GM12878 (cell line): ENCODE measurements at regions of chr1 and their contacts with region 1.

Region 1: DNA sequence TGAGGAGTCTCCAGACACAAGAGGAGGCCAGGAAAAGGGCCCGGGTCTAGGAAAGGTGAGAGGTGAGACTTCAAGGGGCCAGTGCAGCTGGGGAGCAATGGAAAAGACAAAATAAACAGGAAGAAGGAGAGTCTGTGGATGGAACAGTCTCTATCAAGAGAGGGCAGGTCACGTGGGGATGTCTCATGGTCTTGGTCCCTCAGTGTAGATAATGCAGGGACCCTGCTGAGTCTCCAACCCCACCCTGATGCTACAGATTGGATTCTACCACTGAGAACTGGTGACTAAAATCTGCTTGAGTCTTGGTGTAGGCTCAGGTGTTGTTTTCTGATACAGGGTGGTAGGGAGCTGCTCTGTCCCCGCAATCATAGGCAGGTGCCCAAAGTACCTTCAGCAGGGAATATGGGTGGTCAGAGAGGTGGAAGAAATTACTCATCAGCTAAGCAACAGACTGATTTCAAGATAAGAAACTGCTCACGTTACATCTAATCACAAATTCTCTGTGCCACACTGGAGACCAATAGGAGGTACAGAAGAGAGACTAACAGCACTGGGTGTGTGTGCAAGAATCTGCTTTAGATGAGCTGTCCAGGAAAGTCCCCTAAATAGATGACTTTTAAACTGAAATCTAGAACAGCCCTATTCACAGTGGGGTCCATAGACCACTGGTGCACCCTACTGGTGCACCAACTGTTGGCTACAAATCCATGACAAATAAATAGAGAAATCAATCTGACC is 101.5 kb upstream of the TLR5 start:
- DNase-seq: peak; percentile 30
- ATAC-seq: peak; percentile 93
- H3K4me3 ChIP-seq: no peak overlapping the region
- H3K27ac ChIP-seq: no peak overlapping the region
- H3K4me1 ChIP-seq: no peaks in the 10 kb centered on the region
- H3K27me3 ChIP-seq: no peaks in the 10 kb centered on the region; a peak in 1 of 4 replicates
- CTCF ChIP-seq: peak; percentile 46 to 84 (median 59); a peak in 5 of 6 replicates
- EP300 ChIP-seq: peak; percentile 22 to 58; a peak in 2 of 4 replicates
- POLR2A ChIP-seq: no peak
- RAD21 ChIP-seq: peak; percentile 66

Region 2: GRCh38 chr1:223081181-223081994 is 163.1 kb before region 1 on chr1:
- CTCF ChIA-PET with region 1: interaction called, 3 read pairs
- POLR2A ChIA-PET with region 1: no interaction called
- RAD21 ChIA-PET with region 1: no interaction called
- SMC1A ChIA-PET with region 1: no interaction called
- in situ Hi-C with region 1: no loop called
- intact Hi-C with region 1: loop called (anchors 5 kb)
- DNase-seq: peak; percentile 11
- ATAC-seq: peak; percentile 99
- H3K4me3 ChIP-seq: peak overlapping the region; percentile 16; the same call in 1 of the 2 replicates
- H3K27ac ChIP-seq: no peak overlapping the region
- H3K4me1 ChIP-seq: no peaks in the 10 kb centered on the region
- H3K27me3 ChIP-seq: no peaks in the 10 kb centered on the region; a peak in 1 of 4 replicates
- CTCF ChIP-seq: peak; percentile 76 to 94 (median 93); a peak in 5 of 6 replicates
- EP300 ChIP-seq: no peak
- POLR2A ChIP-seq: no peak
- RAD21 ChIP-seq: peak; percentile 85

Region 3: GRCh38 chr1:223123011-223123610 is 121.4 kb before region 1 on chr1:
- CTCF ChIA-PET with region 1: interaction called, 17 read pairs
- POLR2A ChIA-PET with region 1: no interaction called
- RAD21 ChIA-PET with region 1: interaction called, 10 read pairs
- SMC1A ChIA-PET with region 1: interaction called, 9 read pairs
- in situ Hi-C with region 1: no loop called
- intact Hi-C with region 1: no loop called
- DNase-seq: no peak
- ATAC-seq: no peak
- H3K4me3 ChIP-seq: no peak overlapping the region
- H3K27ac ChIP-seq: no peak overlapping the region
- H3K4me1 ChIP-seq: no peaks in the 10 kb centered on the region
- H3K27me3 ChIP-seq: no peaks in the 10 kb centered on the region; a peak in 1 of 4 replicates
- CTCF ChIP-seq: no peak
- EP300 ChIP-seq: no peak
- POLR2A ChIP-seq: no peak
- RAD21 ChIP-seq: no peak

Region 4: DNA sequence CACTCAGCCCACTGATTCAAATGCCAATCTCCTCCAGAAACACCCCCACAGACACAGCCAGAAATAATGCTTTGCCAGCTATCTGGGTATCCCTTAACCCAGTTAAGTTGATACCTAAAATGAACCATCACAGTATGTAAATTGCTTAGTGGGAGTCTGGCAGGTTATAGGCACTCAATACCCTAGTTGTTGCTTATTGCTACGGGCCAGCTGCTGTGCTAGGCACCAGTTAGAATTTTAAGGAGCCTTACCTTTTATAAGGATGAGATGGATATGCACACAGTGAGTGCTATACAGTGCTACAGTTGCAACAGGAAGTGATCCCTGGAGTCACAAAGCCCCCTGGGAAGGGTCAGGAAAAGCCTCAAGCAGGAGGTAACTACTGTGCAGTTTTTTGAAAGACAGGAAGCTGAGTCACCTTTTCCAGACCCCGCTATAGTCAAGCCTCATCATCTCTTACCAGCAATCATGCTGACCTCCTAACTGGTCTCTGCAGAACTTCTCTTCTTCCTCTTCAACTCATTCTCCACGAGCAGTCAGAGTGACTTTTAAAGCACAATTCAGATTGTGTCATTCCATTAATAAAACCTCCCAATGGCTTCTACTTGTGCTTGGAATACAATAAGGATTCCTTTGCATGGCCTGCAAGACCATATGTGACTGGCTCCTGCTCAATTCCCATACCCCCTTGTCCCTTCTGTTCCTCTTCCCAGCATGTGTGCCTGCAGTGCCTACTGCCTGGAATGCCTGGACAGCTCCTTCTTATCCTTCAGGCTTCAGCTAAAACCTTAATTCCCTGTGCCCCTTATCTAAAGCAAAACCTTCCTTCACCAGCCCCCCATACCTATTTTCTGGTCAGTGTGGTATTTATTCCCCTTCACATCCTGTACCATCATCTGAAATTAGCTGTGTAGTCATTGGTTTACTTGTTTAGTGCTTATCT is 91.1 kb before region 1 on chr1:
- CTCF ChIA-PET with region 1: interaction called, 3 read pairs
- POLR2A ChIA-PET with region 1: no interaction called
- RAD21 ChIA-PET with region 1: interaction called, 7 read pairs
- SMC1A ChIA-PET with region 1: interaction called, 11 read pairs
- in situ Hi-C with region 1: no loop called
- intact Hi-C with region 1: no loop called
- DNase-seq: no peak
- ATAC-seq: peak; percentile 28; the same call in 2 of the 3 replicates
- H3K4me3 ChIP-seq: no peak overlapping the region
- H3K27ac ChIP-seq: no peak overlapping the region
- H3K4me1 ChIP-seq: no peaks in the 10 kb centered on the region
- H3K27me3 ChIP-seq: no peaks in the 10 kb centered on the region
- CTCF ChIP-seq: no peak
- EP300 ChIP-seq: no peak
- POLR2A ChIP-seq: no peak
- RAD21 ChIP-seq: no peak

Region 5: DNA sequence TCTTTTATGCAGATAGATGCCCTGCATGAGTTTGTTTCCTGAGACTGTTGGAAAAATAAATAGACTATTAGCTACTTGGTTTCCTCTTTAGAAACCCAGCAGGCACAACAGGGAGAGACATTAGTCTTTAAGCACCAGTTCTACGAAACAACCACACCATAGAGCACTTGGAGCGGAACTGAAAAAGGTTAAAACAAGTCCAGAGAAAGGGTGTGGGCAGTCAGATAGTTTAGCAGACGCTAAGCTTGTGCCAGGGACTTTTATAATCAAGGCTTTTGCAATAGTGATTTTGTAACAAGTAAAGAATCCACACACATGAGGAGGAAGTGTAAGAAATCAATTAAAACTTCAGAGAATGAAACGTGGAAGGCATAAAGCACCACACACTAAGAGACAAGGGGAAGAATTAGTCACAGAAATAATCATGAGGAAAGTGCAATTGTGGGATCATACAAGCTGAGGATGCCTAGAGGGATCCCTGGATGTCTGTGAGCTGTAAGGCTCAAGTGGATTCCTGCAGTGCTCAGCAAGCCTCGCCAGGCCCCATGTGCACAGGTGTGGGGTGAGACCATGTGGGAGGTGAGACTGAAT is 63.7 kb before region 1 on chr1:
- CTCF ChIA-PET with region 1: interaction called, 62 read pairs
- POLR2A ChIA-PET with region 1: no interaction called
- RAD21 ChIA-PET with region 1: interaction called, 21 read pairs
- SMC1A ChIA-PET with region 1: interaction called, 31 read pairs
- in situ Hi-C with region 1: no loop called
- intact Hi-C with region 1: no loop called
- DNase-seq: peak; percentile 12
- ATAC-seq: peak; percentile 95
- H3K4me3 ChIP-seq: no peak overlapping the region
- H3K27ac ChIP-seq: no peak overlapping the region
- H3K4me1 ChIP-seq: no peaks in the 10 kb centered on the region
- H3K27me3 ChIP-seq: peaks cover 0 to 3% of the 10 kb centered on the region in 2 experiments; a peak in 2 of 4 replicates
- CTCF ChIP-seq: no peak
- EP300 ChIP-seq: peak in 1 of 2 experiments; percentile 68; a peak in 2 of 4 replicates
- POLR2A ChIP-seq: no peak
- RAD21 ChIP-seq: no peak

Region 6: DNA sequence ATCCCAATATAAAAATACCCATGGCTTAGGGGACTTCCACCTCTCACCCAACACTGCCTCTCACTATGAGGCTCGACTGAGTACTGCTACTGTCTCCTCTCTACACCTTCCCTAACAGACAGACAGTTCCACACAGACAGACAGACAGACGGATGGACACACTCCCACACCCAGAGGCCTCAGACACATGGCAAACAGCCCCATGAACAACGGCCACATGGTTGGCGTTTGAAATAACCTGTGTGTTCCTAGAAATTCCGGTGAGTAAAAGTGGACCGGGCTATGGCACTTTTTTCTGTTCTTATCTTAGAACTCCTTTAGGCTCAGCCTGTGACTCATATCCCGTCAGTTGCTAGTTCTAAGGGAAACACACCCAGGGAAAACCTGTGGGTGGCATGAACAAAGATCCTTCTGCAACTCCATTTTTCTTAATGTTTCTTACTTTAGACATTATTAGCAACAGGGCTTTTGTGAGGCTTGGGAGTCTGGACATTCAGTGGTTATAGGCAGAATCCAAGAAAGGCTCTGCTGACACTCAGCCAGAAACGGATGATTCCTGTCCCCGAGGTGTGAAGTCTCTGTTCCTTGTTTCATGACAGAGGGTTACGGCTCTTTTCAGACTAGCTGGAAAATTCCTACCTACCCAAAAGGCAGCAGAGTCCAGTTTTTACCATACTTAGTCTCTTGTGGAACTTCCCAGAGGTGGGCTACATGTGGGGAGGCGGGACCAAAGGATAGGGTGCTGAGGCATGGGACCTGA is 10.9 kb before region 1 on chr1:
- CTCF ChIA-PET with region 1: interaction called, 7 read pairs
- POLR2A ChIA-PET with region 1: interaction called, 4 read pairs
- RAD21 ChIA-PET with region 1: interaction called, 25 read pairs
- SMC1A ChIA-PET with region 1: interaction called, 6 read pairs
- in situ Hi-C with region 1: no loop called
- intact Hi-C with region 1: no loop called
- DNase-seq: no peak
- ATAC-seq: peak; percentile 89
- H3K4me3 ChIP-seq: no peak overlapping the region
- H3K27ac ChIP-seq: no peak overlapping the region
- H3K4me1 ChIP-seq: no peaks in the 10 kb centered on the region
- H3K27me3 ChIP-seq: no peaks in the 10 kb centered on the region; a peak in 1 of 4 replicates
- CTCF ChIP-seq: no peak
- EP300 ChIP-seq: 0 out of 4 replicates have a peak, but pooled peaks of 1 of the 2 experiments have one; percentile 16
- POLR2A ChIP-seq: no peak
- RAD21 ChIP-seq: no peak

Region 7: DNA sequence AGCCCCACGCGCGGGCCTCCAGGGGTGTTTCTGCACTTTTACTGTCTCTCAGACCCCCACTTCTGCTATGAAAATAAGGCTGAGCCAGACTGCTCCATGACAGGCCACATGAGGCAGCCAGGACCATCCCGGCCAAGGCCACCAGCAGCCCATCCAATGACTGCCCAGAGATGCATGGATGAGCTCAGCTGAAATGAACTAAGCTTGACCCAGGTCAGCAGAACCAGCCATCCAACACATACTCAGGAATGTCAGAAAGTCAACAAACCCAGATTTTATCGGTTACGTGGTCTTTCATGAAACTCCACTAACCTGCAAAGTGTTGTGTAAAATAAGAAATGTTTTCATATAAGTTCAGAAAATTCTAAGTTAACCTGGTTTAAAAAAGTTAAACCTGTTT is 199.9 kb after region 1 on chr1:
- CTCF ChIA-PET with region 1: no interaction called
- POLR2A ChIA-PET with region 1: no interaction called
- RAD21 ChIA-PET with region 1: no interaction called
- SMC1A ChIA-PET with region 1: no interaction called
- in situ Hi-C with region 1: no loop called
- intact Hi-C with region 1: no loop called
- DNase-seq: no peak
- ATAC-seq: no peak
- H3K4me3 ChIP-seq: no peak overlapping the region
- H3K27ac ChIP-seq: no peak overlapping the region
- H3K4me1 ChIP-seq: no peaks in the 10 kb centered on the region
- H3K27me3 ChIP-seq: no peaks in the 10 kb centered on the region
- CTCF ChIP-seq: no peak
- EP300 ChIP-seq: no peak
- POLR2A ChIP-seq: no peak
- RAD21 ChIP-seq: no peak

Region 8: DNA sequence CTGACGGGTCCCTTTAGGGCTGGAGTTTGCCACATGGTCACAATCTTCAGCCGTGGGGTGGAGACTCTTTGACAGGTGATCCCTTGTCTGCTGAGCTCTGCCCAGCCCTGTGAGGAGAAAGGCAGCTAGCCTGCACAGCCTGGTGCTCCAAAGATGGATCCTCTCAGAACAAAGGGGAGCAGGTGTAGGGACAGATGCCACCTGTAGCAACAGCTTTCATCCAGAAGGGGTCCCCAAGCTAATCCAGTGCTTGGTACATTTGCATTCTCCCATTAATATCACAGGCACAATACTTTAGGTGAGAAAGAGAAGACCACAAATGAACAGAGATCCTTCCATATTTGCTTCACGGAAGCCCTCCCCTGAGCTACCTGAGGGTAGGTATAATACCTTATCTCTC is 241.8 kb after region 1 on chr1:
- CTCF ChIA-PET with region 1: no interaction called
- POLR2A ChIA-PET with region 1: no interaction called
- RAD21 ChIA-PET with region 1: no interaction called
- SMC1A ChIA-PET with region 1: no interaction called
- in situ Hi-C with region 1: no loop called
- intact Hi-C with region 1: no loop called
- DNase-seq: no peak
- ATAC-seq: peak; percentile 55; the same call in 2 of the 3 replicates
- H3K4me3 ChIP-seq: no peak overlapping the region
- H3K27ac ChIP-seq: no peak overlapping the region
- H3K4me1 ChIP-seq: peaks cover 4% of the 10 kb centered on the region; the same call in 1 of the 2 replicates
- H3K27me3 ChIP-seq: peaks cover 0 to 1% of the 10 kb centered on the region in 2 experiments; a peak in 2 of 4 replicates
- CTCF ChIP-seq: peak in 2 of 3 experiments; percentile 7 to 9; a peak in 2 of 6 replicates
- EP300 ChIP-seq: no peak
- POLR2A ChIP-seq: no peak
- RAD21 ChIP-seq: no peak